Caco-2 (cell line): ENCODE measurements at regions of chr13 and their contacts with region 1.

Region 1: DNA sequence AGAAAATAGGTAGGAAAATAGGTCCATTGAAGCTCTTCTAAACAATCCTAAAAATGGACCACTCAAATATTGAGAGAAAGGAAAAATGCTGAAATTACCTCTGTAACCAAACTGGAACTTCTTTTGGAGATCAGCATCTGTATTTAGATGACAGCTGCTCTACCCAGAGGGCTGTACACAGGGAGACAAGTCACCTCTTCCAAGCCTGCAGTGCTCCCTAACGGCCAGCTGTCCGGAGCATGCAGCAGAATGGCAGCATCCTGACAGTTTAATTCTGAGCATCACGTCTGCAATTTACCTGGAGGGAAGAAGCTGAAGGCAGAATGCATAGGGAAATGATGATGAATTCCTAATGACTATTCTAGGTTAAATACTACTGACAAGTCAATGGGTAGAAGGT is 62.8 kb upstream of the DIAPH3 start:
- DNase-seq: peak; percentile 69 to 79
- H3K4me3 ChIP-seq: no peak overlapping the region
- H3K4me3 Mint-ChIP-seq: no peak overlapping the region
- H3K27ac Mint-ChIP-seq: no peak overlapping the region
- H3K4me1 ChIP-seq: peaks cover 25% of the 10 kb centered on the region
- H3K4me1 Mint-ChIP-seq: peaks cover 27% of the 10 kb centered on the region
- H3K27me3 ChIP-seq: no peaks in the 10 kb centered on the region
- H3K27me3 Mint-ChIP-seq: no peaks in the 10 kb centered on the region
- CTCF ChIP-seq: peak; percentile 55 to 76

Region 2: DNA sequence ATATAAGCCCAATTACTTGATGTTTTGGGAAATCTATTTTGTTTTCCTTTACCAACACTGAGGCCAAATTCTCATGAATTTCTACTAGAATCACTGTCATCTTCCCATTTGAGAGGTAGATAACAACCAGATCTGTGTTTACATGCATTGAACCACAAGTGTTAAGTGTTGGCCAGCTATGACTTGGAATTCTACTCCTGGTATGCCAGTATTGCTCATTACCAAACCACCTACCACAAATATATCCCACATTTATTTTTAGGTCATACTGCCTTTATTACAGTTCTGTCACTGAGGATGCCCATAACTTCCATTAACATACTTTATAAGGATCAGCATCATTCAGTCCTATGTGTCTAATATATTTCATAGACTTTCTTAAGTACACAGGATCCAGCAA is 391.7 kb before region 1 on chr13:
- CTCF ChIA-PET with region 1: no interaction called
- POLR2A ChIA-PET with region 1: no interaction called
- intact Hi-C with region 1: loop called (anchors 5 kb)
- DNase-seq: no peak
- H3K4me3 ChIP-seq: no peak overlapping the region
- H3K4me3 Mint-ChIP-seq: peak overlapping the region; percentile 46
- H3K27ac Mint-ChIP-seq: peak overlapping the region; percentile 97
- H3K4me1 ChIP-seq: peaks cover 59% of the 10 kb centered on the region
- H3K4me1 Mint-ChIP-seq: peaks cover 28% of the 10 kb centered on the region
- H3K27me3 ChIP-seq: no peaks in the 10 kb centered on the region
- H3K27me3 Mint-ChIP-seq: no peaks in the 10 kb centered on the region
- CTCF ChIP-seq: no peak

Region 3: GRCh38 chr13:59975807-59976435 is 250.6 kb before region 1 on chr13:
- CTCF ChIA-PET with region 1: interaction called, 3 read pairs
- POLR2A ChIA-PET with region 1: no interaction called
- intact Hi-C with region 1: loop called (anchors 2 kb)
- DNase-seq: no peak
- H3K4me3 ChIP-seq: no peak overlapping the region
- H3K4me3 Mint-ChIP-seq: no peak overlapping the region
- H3K27ac Mint-ChIP-seq: no peak overlapping the region
- H3K4me1 ChIP-seq: peaks cover 35% of the 10 kb centered on the region
- H3K4me1 Mint-ChIP-seq: peaks cover 9% of the 10 kb centered on the region
- H3K27me3 ChIP-seq: no peaks in the 10 kb centered on the region
- H3K27me3 Mint-ChIP-seq: no peaks in the 10 kb centered on the region
- CTCF ChIP-seq: no peak

Region 4: GRCh38 chr13:60201286-60201685 is 25.2 kb before region 1 on chr13:
- CTCF ChIA-PET with region 1: no interaction called
- POLR2A ChIA-PET with region 1: no interaction called
- intact Hi-C with region 1: loop called (anchors 1 kb)
- DNase-seq: no peak
- H3K4me3 ChIP-seq: no peak overlapping the region
- H3K4me3 Mint-ChIP-seq: no peak overlapping the region
- H3K27ac Mint-ChIP-seq: no peak overlapping the region
- H3K4me1 ChIP-seq: peaks cover 15% of the 10 kb centered on the region
- H3K4me1 Mint-ChIP-seq: peaks cover 15% of the 10 kb centered on the region
- H3K27me3 ChIP-seq: no peaks in the 10 kb centered on the region
- H3K27me3 Mint-ChIP-seq: no peaks in the 10 kb centered on the region
- CTCF ChIP-seq: no peak

Region 5: GRCh38 chr13:60311527-60311926 is 85.0 kb after region 1 on chr13:
- CTCF ChIA-PET with region 1: no interaction called
- POLR2A ChIA-PET with region 1: no interaction called
- intact Hi-C with region 1: no loop called
- DNase-seq: no peak
- H3K4me3 ChIP-seq: no peak overlapping the region
- H3K4me3 Mint-ChIP-seq: no peak overlapping the region
- H3K27ac Mint-ChIP-seq: no peak overlapping the region
- H3K4me1 ChIP-seq: no peaks in the 10 kb centered on the region
- H3K4me1 Mint-ChIP-seq: no peaks in the 10 kb centered on the region
- H3K27me3 ChIP-seq: no peaks in the 10 kb centered on the region
- H3K27me3 Mint-ChIP-seq: no peaks in the 10 kb centered on the region
- CTCF ChIP-seq: no peak

Region 6: GRCh38 chr13:60431108-60431700 is 204.7 kb after region 1 on chr13:
- CTCF ChIA-PET with region 1: no interaction called
- POLR2A ChIA-PET with region 1: no interaction called
- intact Hi-C with region 1: loop called (anchors 5 kb)
- DNase-seq: peak in 1 of 2 experiments; percentile 58
- H3K4me3 ChIP-seq: no peak overlapping the region
- H3K4me3 Mint-ChIP-seq: no peak overlapping the region
- H3K27ac Mint-ChIP-seq: no peak overlapping the region
- H3K4me1 ChIP-seq: no peaks in the 10 kb centered on the region
- H3K4me1 Mint-ChIP-seq: no peaks in the 10 kb centered on the region
- H3K27me3 ChIP-seq: no peaks in the 10 kb centered on the region
- H3K27me3 Mint-ChIP-seq: no peaks in the 10 kb centered on the region
- CTCF ChIP-seq: peak; percentile 85 to 86